ENCODE measurements at regions of chr19 and their contacts with region 1.

Region 1: DNA sequence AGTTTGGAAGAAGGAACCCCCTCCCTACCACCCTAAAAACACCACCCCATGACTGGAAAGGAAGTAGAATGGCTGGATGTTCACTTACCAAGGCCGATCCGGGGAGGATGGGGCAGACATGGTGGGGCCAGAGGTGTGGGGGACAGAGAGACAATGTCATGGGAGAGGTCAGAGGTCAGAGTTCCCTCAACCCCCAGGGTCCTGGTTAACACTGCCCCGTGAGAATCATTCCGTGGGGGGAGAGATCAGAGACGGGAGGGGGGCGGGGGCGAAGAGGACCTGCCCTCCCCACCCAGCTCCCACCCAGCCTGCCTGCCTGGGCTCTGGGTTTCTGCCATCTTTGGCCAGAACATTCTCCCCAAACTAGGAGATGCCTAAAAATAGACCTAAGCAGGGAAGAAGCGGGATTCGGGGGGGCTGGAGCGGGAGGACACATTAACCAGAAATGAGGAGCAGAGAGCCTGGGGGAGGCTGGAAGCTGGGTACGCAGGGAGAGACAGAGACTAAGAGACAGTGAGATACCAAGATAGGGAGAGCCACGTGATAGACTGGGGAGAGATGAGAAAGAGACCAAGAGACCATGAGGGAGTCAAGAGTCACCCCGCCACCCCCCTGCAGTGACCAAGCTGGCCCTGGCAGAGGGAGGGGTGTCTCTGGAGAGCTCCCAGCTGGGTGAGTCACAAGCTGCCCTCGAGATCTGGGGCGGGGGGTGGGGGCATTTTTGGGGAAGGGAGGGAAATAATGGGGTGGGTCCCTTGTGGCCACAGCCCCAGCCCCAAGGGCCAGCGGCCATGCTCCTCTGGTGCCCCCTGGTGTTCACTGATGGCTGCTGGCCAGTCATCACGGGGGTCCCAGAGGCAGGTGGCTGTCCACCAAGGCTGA is 6.1 kb upstream of the KANK2 start:
- DNase-seq: peak; percentile 87
- ATAC-seq: peak; percentile 81 to 83

Region 2: GRCh38 chr19:11035441-11036377 is 167.7 kb before region 1 on chr19:
- intact Hi-C with region 1: loop called in 1 of 2 experiments (anchors 10 kb)
- DNase-seq: peak; percentile 94
- ATAC-seq: peak; percentile 92 to 95

Region 3: DNA sequence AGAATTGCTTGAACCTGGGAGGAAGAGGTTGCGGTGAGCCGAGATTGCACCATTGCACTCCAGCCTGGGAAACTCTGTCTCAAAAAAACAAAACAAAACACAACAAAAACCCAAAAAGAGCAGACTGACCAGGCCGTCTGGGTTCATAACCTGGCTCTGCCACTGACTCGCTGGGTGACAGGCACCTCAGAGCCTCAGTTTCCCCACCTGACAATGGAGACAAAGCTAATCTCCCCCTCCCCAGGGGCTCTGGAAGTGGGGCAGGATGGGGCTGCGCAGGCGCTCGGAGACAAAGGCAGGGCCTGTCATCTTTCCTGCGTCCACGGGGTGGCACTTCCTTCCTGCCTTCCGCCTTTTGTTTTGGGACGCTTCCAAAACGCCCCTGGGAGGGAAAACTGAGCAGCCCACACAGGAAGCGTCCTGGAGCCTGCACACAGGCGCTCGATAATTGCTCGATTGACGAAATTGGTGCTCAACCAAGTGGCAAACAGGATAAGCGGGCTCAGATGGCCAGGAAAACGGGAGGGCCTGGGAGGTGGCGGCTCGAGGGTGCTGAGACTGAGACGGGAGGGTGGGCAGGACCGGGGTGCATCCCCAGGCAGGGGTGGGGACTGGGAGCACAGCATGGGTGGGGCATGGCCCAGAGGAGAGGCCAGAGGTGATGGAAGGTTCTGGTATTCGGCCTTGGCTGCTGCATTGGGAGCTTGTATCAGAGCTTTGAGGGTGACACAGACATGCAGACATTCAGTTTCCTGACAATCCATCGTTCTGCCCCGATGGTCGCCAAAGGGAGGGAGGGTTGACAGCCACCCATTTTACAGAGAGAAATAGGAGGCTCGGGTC is 65.7 kb before region 1 on chr19:
- intact Hi-C with region 1: loop called (anchors 2 to 5 kb)
- DNase-seq: peak; percentile 89
- ATAC-seq: peak; percentile 54 to 60

Measured in left cardiac atrium (tissue), 4 donors.